CD8-positive, alpha-beta T cell (primary cell): ENCODE measurements at regions of chr4 and their contacts with region 1.

Region 1: DNA sequence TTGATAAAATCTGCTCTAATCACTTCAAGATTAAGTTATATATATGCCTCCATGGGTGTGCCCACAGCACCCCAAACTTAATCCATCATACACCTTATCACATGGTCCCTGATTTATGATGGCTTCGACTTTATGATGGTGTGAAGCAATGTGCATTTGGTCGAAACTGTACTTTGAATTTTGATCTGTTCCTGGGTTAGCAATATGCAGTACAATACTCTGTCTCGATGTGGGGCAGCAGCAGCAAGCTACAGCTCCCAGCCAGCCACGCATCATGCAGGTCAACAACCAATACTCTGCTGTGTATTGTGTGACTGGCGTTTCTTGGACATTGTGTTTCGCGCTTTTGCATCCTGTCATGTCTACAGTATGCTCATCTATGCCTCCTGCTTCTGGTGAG is 62.6 kb downstream of the MCUB start:
- DNase-seq: no peak
- ATAC-seq: no peak
- H3K4me3 ChIP-seq: no peak overlapping the region
- H3K4me3 Mint-ChIP-seq: no peak overlapping the region
- H3K27ac ChIP-seq: no peak overlapping the region
- H3K27ac Mint-ChIP-seq: peak overlapping the region; percentile 30
- H3K4me1 ChIP-seq: no peaks in the 10 kb centered on the region
- H3K4me1 Mint-ChIP-seq: peaks cover 64% of the 10 kb centered on the region
- H3K27me3 ChIP-seq: no peaks in the 10 kb centered on the region
- H3K27me3 Mint-ChIP-seq: no peaks in the 10 kb centered on the region
- CTCF ChIP-seq: no peak

Region 2: GRCh38 chr4:109658871-109659410 is 36.3 kb after region 1 on chr4:
- CTCF ChIA-PET with region 1: interaction called, 5 read pairs
- POLR2A ChIA-PET with region 1: no interaction called
- intact Hi-C with region 1: loop called in 1 of 2 experiments (anchors 5 kb)
- DNase-seq: peak in 3 of 9 experiments; percentile 27 to 53 (median 45)
- ATAC-seq: peak; percentile 58
- H3K4me3 ChIP-seq: no peak overlapping the region
- H3K4me3 Mint-ChIP-seq: no peak overlapping the region
- H3K27ac ChIP-seq: no peak overlapping the region
- H3K27ac Mint-ChIP-seq: peak overlapping the region; percentile 3
- H3K4me1 ChIP-seq: peaks cover 35% of the 10 kb centered on the region
- H3K4me1 Mint-ChIP-seq: peaks cover 59% of the 10 kb centered on the region
- H3K27me3 ChIP-seq: no peaks in the 10 kb centered on the region
- H3K27me3 Mint-ChIP-seq: no peaks in the 10 kb centered on the region
- CTCF ChIP-seq: no peak